ENCODE measurements at regions of chr3 and their contacts with region 1.

Region 1: GRCh38 chr3:128095222-128095703 is 28.3 kb downstream of the RUVBL1 start:
- DNase-seq: peak; percentile 83
- H3K4me3 ChIP-seq: no peak overlapping the region
- H3K27ac ChIP-seq: no peak overlapping the region
- H3K4me1 ChIP-seq: peaks cover 0 to 9% (median 2%) of the 10 kb centered on the region in 4 donors
- H3K27me3 ChIP-seq: no peaks in the 10 kb centered on the region
- CTCF ChIP-seq: peak; percentile 73 to 85 (median 77)
- EP300 ChIP-seq: no peak
- POLR2A ChIP-seq: no peak

Region 2: GRCh38 chr3:128195802-128196201 is 100.5 kb after region 1 on chr3:
- in situ Hi-C with region 1: no loop called
- intact Hi-C with region 1: no loop called
- DNase-seq: no peak
- H3K4me3 ChIP-seq: no peak overlapping the region
- H3K27ac ChIP-seq: peak overlapping the region; percentile 16 to 42 (median 29)
- H3K4me1 ChIP-seq: peaks cover 0 to 27% (median 7%) of the 10 kb centered on the region in 4 donors
- H3K27me3 ChIP-seq: no peaks in the 10 kb centered on the region
- CTCF ChIP-seq: no peak
- EP300 ChIP-seq: no peak
- POLR2A ChIP-seq: no peak

Region 3: GRCh38 chr3:128274771-128275211 is 179.5 kb after region 1 on chr3:
- in situ Hi-C with region 1: no loop called
- intact Hi-C with region 1: no loop called
- DNase-seq: no peak
- H3K4me3 ChIP-seq: no peak overlapping the region
- H3K27ac ChIP-seq: no peak overlapping the region
- H3K4me1 ChIP-seq: peaks cover 0 to 4% (median 1%) of the 10 kb centered on the region in 4 donors
- H3K27me3 ChIP-seq: no peaks in the 10 kb centered on the region
- CTCF ChIP-seq: no peak
- EP300 ChIP-seq: no peak
- POLR2A ChIP-seq: no peak

Region 4: DNA sequence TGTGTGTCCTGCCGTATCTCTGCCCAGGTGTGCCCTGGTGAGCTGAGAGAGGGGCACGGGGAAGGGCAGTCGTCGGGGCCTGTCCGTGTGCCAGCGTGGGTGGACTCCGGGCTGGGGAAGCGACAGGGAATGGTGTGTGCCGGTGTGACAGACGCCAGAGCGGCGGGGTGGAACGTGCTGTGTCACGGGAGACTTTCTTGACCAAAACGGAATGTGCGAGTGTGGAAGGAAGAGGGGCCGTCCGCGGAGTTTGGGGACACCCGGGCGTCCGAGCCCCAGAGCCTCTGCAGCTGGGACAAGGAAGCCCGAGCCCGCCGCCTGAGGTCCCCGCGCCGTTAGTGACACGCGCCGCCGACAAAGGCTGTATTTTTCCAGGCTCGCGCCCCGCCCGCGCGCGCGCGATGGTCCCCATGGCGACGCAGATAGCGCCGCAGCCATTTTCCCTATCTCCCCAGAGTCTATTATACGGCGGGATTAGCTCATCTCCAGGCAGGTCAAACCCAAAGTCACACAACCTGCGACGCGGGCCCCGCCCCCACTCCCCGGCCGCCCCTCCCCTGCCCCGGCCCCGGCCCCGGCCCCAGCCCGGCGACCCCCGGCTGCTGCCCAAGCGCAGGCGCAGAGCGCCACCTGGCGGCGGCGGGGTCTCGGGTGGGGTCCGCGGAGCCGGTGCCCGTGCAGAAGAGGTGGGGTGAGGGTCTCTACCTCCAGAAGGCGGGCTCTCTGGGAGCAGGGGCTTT is 402.3 kb after region 1 on chr3:
- in situ Hi-C with region 1: loop called in 1 of 4 experiments (anchors 25 kb)
- intact Hi-C with region 1: loop called (anchors 2 kb)
- DNase-seq: peak; percentile 61
- H3K4me3 ChIP-seq: peak overlapping the region; percentile 7 to 48 (median 40)
- H3K27ac ChIP-seq: no peak overlapping the region
- H3K4me1 ChIP-seq: peaks cover 9 to 12% (median 11%) of the 10 kb centered on the region in 4 donors
- H3K27me3 ChIP-seq: peaks cover 100% of the 10 kb centered on the region
- CTCF ChIP-seq: peak; percentile 48 to 76 (median 63)
- EP300 ChIP-seq: no peak
- POLR2A ChIP-seq: no peak

Region 5: DNA sequence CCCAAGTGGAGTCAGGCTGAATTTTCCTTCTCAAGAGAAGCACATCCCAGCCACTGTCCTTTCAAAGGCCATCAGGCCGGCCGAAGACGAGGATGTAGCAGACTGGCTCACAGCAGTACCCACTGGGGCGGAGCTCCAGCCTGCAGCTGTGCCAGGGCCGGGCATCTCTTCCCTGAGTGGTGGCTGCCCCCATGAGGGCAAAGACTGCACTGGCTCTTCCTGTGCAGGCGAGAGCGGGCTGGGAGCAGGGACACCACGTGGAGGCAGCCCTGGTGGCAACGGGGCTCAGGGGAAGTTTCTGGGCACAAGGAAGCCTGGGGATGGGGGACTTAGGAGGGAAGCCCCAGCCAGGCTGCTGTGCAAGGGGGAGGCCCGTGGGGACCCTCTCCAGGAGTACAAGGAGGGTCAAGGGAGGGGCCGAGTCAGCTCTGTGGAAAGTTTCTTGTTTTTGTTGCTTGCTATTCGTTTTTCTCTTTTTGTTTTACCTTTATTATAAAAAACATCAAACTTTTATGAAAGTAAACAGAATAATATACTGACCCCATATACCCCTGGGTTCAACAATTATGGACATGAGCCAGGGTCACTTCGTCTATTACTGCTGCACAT is 489.3 kb after region 1 on chr3:
- in situ Hi-C with region 1: loop called in 1 of 4 experiments (anchors 25 kb)
- intact Hi-C with region 1: no loop called
- DNase-seq: peak; percentile 61
- H3K4me3 ChIP-seq: no peak overlapping the region
- H3K27ac ChIP-seq: no peak overlapping the region
- H3K4me1 ChIP-seq: peaks cover 0 to 5% (median 0%) of the 10 kb centered on the region in 4 donors
- H3K27me3 ChIP-seq: peaks cover 10% of the 10 kb centered on the region
- CTCF ChIP-seq: peak; percentile 34 to 70 (median 56)
- EP300 ChIP-seq: no peak
- POLR2A ChIP-seq: no peak

Region 6: DNA sequence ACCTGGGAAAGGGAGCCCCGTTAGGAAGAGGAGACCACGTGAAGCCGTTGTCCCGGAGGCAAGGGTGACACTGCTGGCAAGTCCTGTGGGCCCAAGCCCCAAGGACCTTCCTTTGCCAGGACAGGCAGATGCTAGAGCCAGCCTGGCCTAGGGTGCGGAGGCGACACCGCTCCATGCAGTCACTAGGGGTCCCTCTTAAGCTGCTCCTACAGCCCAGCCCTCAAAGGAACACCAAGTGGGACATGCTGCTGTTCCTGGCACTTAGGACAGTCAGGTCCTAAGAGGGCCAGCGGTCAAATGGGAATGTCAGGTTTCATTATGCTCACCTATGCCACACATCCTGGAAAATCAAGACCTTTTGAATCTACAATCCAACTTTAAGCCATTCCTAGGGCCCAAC is 495.7 kb after region 1 on chr3:
- in situ Hi-C with region 1: loop called in 2 of 4 experiments (anchors 10 to 25 kb)
- intact Hi-C with region 1: no loop called
- DNase-seq: no peak
- H3K4me3 ChIP-seq: no peak overlapping the region
- H3K27ac ChIP-seq: no peak overlapping the region
- H3K4me1 ChIP-seq: no peaks in the 10 kb centered on the region
- H3K27me3 ChIP-seq: peaks cover 5% of the 10 kb centered on the region
- CTCF ChIP-seq: no peak
- EP300 ChIP-seq: no peak
- POLR2A ChIP-seq: no peak

Region 7: GRCh38 chr3:128607710-128608048 is 512.4 kb after region 1 on chr3:
- in situ Hi-C with region 1: loop called in 1 of 4 experiments (anchors 25 kb)
- intact Hi-C with region 1: loop called (anchors 2 kb)
- DNase-seq: no peak
- H3K4me3 ChIP-seq: peak overlapping the region in 3 of 4 donors; percentile 30 to 70 (median 54)
- H3K27ac ChIP-seq: peak overlapping the region in 3 of 4 donors; percentile 37 to 68 (median 59)
- H3K4me1 ChIP-seq: peaks cover 0 to 13% (median 7%) of the 10 kb centered on the region in 4 donors
- H3K27me3 ChIP-seq: no peaks in the 10 kb centered on the region
- CTCF ChIP-seq: no peak
- EP300 ChIP-seq: no peak
- POLR2A ChIP-seq: no peak

Region 8: DNA sequence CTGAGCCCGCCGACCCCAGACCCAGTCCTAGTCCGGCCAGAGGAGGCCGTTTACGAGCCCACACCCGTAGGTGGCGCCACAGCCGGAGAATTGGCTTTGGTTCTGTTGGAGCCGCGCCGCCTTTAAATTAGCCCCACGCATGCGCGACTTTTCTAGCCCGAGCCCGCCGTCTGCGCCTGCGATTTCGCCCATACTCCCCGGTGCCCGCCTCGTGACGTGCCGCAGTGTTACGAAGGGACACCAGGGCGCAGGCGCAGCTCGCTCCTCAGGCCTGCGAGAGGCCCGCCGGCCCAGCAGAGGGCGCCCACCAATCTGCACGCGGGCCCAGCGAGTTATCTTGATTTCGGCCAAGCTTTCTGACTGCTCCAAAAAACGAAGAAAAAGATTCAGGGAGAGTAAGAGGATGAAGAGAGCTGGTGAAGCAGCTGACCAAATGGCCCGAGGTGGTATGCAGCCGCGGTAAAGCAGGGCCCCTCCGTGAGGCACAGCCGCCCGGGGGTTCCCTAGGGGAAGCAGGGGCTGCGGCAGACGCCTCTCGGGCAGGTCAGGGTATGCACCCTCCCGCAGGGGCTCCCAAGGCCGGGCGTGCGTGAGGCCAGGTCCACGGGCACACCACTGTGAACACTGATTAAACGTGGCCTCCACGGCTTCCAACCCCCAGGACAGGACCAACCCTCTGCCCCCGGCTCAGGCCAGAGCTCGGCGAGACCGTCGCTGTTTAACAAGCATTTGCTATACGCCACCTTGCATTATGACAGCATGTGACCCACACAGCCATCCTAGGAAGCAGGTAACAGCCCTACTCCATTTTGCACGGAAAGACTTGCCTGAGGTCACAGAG is 522.5 kb after region 1 on chr3:
- in situ Hi-C with region 1: loop called in 1 of 4 experiments (anchors 25 kb)
- intact Hi-C with region 1: no loop called
- DNase-seq: peak; percentile 99
- H3K4me3 ChIP-seq: peak overlapping the region; percentile 67 to 79 (median 70)
- H3K27ac ChIP-seq: peak overlapping the region; percentile 83 to 91 (median 89)
- H3K4me1 ChIP-seq: peaks cover 10 to 18% (median 14%) of the 10 kb centered on the region in 4 donors
- H3K27me3 ChIP-seq: no peaks in the 10 kb centered on the region
- CTCF ChIP-seq: peak; percentile 88 to 99 (median 95)
- EP300 ChIP-seq: no peak
- POLR2A ChIP-seq: peak; percentile 58